ENCODE measurements at regions of chr10 and their contacts with region 1.

Region 1: GRCh38 chr10:107390563-107390962 is 226.1 kb upstream of the SORCS1 start:
- H3K4me3 ChIP-seq: no peak overlapping the region
- H3K27ac ChIP-seq: no peak overlapping the region
- H3K4me1 ChIP-seq: no peaks in the 10 kb centered on the region
- CTCF ChIP-seq: no peak

Region 2: GRCh38 chr10:107115185-107115584 is 275.4 kb before region 1 on chr10:
- CTCF ChIA-PET with region 1: interaction called, 10 read pairs
- POLR2A ChIA-PET with region 1: no interaction called
- H3K4me3 ChIP-seq: no peak overlapping the region
- H3K27ac ChIP-seq: no peak overlapping the region
- H3K4me1 ChIP-seq: no peaks in the 10 kb centered on the region
- CTCF ChIP-seq: no peak

Region 3: DNA sequence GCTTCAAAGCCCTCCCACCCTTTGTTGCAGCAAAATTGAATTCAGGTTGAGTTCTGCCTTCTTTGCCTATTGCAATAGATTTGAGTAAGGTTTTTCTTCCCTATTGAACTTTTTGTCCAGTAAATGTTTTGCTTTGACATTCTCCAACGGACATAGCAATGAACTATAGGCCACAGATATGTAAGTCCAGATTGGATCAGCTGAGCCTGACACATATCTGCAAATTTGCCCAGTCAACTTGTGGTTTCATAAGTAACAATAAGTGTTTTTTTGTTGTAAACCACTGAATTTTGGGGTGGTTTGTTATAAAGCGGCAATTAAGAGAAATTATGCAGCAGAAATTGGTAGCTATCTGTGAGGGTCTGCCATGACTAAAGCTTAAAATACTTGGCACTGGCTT is 106.0 kb after region 1 on chr10:
- CTCF ChIA-PET with region 1: no interaction called
- POLR2A ChIA-PET with region 1: no interaction called
- H3K4me3 ChIP-seq: no peak overlapping the region
- H3K27ac ChIP-seq: no peak overlapping the region
- H3K4me1 ChIP-seq: no peaks in the 10 kb centered on the region
- CTCF ChIP-seq: no peak